ENCODE measurements at regions of chr1 and their contacts with region 1.

Region 1: DNA sequence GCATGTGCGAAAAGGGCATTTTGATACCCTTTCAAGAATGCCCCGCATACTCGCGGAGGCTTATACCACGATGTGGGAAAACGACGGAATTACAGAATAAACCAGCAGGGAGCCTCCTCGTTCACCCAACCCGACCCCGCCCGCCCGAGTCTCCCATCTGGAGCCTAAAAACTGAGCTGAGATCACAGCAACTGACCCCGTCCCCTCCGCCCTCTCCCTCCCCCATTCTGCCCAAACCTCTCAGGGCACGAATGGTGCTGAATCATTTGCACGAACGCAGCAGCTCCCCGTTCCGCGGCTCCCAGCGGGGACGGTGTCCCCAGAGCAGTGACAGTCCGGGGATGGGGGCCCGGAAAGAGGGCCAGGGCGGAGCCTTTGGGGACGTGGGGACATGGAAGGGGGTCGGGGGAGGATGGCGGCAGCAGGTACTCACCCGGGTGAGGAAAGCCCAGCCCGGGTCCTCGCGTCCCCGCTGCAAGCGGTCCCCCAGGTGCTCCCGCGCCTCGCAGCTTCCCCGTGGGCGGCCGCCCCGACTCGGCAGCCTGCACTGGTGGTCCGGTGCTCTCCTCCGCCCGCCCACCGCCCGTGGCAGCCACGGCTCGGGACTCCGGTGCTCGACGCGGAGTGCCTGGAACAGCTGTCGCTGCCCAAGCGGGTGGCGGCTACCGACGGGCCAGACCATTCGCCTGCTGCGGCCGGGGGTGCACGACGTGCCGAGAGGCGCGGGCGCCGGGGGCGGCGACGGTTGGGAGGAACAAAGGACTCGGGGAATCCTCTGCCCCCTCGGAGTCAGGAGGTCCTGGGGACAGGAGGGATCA is at the start of gene TTLL7:
- DNase-seq: peak; percentile 93
- H3K4me3 ChIP-seq: peak within 1 kb of the TSS; percentile 87 to 99 (median 92)
- H3K27ac ChIP-seq: peak within 1 kb of the TSS; percentile 86 to 94 (median 89)
- H3K4me1 ChIP-seq: peaks cover 0 to 40% (median 35%) of the 10 kb centered on the region in 4 donors
- H3K27me3 ChIP-seq: no peaks in the 10 kb centered on the region
- CTCF ChIP-seq: no peak
- EP300 ChIP-seq: no peak
- POLR2A ChIP-seq: no peak
- total RNA-seq, gene TTLL7: 26.2 to 58.1 (median 41.2) TPM

Region 2: DNA sequence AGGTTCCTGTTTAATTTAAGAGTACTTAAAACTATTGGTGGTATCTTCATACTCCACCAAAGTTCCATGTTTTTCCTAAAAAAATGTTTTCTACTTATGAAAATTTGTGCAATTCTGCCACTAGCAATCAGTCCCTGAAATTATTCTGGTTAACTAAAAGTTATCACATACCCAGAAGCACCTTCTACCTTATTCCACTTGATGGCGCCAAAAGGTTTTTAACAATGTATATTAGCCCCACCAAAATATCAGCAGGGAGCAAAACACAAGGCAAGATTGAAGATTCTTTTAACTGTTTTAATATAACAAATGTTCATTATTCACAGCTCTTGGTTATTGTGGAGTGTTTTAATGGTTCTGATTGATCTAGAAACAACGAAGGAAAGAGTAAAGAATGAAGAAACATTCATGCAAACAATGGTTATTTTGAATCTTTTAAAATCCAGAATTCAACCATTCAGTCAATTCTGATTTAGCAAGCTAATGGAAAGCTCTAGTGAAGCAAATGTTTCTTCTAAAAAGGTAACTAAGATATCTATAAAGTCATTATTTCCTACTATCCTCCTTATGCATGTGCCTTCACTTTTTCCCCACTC is 67.0 kb before region 1 on chr1:
- intact Hi-C with region 1: loop called (anchors 5 kb)
- DNase-seq: no peak
- H3K4me3 ChIP-seq: no peak overlapping the region
- H3K27ac ChIP-seq: no peak overlapping the region
- H3K4me1 ChIP-seq: peaks cover 0 to 16% (median 7%) of the 10 kb centered on the region in 4 donors
- H3K27me3 ChIP-seq: no peaks in the 10 kb centered on the region
- CTCF ChIP-seq: peak; percentile 75 to 82 (median 79)
- EP300 ChIP-seq: no peak
- POLR2A ChIP-seq: no peak

Region 3: GRCh38 chr1:84077476-84078107 is 78.9 kb after region 1 on chr1:
- intact Hi-C with region 1: loop called (anchors 5 kb)
- DNase-seq: peak; percentile 93
- H3K4me3 ChIP-seq: peak overlapping the region; percentile 67 to 96 (median 89)
- H3K27ac ChIP-seq: peak overlapping the region; percentile 87 to 95 (median 91)
- H3K4me1 ChIP-seq: peaks cover 0 to 29% (median 27%) of the 10 kb centered on the region in 4 donors
- H3K27me3 ChIP-seq: no peaks in the 10 kb centered on the region
- CTCF ChIP-seq: no peak
- EP300 ChIP-seq: no peak
- POLR2A ChIP-seq: no peak

Region 4: GRCh38 chr1:84122780-84123382 is 124.2 kb after region 1 on chr1:
- intact Hi-C with region 1: loop called (anchors 10 kb)
- DNase-seq: no peak
- H3K4me3 ChIP-seq: no peak overlapping the region
- H3K27ac ChIP-seq: no peak overlapping the region
- H3K4me1 ChIP-seq: peaks cover 0 to 12% (median 3%) of the 10 kb centered on the region in 4 donors
- H3K27me3 ChIP-seq: no peaks in the 10 kb centered on the region
- CTCF ChIP-seq: peak; percentile 68 to 80 (median 71)
- EP300 ChIP-seq: no peak
- POLR2A ChIP-seq: no peak

Measured in esophagus muscularis mucosa (tissue), 4 donors.